B cell (primary cell): ENCODE measurements at regions of chr12 and their contacts with region 1.

Region 1: DNA sequence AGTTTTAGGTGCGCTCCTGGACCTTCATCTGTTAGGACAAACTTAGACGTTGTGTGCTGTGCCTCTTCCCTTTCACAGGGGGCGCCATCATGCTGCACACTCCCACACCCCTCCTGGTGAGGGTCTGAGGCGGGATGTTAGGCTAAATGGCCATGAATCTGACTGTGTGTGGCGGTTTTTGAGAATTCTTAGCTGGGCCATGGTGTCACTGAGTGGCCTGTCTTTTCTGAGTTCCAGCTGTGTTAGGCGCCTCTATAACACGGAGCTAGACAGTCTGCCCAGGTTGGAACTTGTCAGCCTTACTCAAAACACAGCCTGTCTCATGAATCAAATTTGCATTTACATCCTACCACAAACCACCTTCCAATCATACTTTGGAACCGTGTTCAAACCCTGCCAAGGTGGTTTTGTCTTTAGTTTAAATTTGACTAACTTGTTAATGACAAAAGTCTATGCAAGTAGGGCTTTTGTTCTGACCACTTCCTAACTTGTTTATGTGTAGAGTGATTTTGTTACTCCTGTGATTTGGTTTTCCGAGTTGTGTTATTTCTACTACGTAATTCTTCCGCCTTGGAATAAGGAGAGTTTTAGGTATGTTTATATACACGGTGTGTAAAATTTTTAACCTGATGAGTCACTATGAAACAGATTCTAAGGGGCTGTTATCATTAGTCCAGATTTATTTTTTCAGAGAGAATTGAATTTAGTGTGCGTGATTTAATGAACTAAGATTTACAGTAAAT is 19.6 kb downstream of the ACVR1B start:
- DNase-seq: peak; percentile 74
- ATAC-seq: peak; percentile 75
- H3K4me3 ChIP-seq: peak overlapping the region in 2 of 5 experiments; percentile 0 to 16
- H3K4me3 Mint-ChIP-seq: peak overlapping the region; percentile 60
- H3K27ac ChIP-seq: no peak overlapping the region
- H3K27ac Mint-ChIP-seq: peak overlapping the region; percentile 4
- H3K4me1 ChIP-seq: peaks cover 47 to 48% of the 10 kb centered on the region in 2 donors
- H3K4me1 Mint-ChIP-seq: peaks cover 52% of the 10 kb centered on the region
- H3K27me3 ChIP-seq: no peaks in the 10 kb centered on the region
- H3K27me3 Mint-ChIP-seq: no peaks in the 10 kb centered on the region
- CTCF ChIP-seq: peak; percentile 73

Region 2: GRCh38 chr12:51879102-51879501 is 92.0 kb before region 1 on chr12:
- CTCF ChIA-PET with region 1: no interaction called
- POLR2A ChIA-PET with region 1: no interaction called
- intact Hi-C with region 1: loop called (anchors 5 kb)
- DNase-seq: no peak
- ATAC-seq: no peak
- H3K4me3 ChIP-seq: no peak overlapping the region
- H3K4me3 Mint-ChIP-seq: no peak overlapping the region
- H3K27ac ChIP-seq: no peak overlapping the region
- H3K27ac Mint-ChIP-seq: no peak overlapping the region
- H3K4me1 ChIP-seq: no peaks in the 10 kb centered on the region
- H3K4me1 Mint-ChIP-seq: no peaks in the 10 kb centered on the region
- H3K27me3 ChIP-seq: no peaks in the 10 kb centered on the region
- H3K27me3 Mint-ChIP-seq: peaks cover 12% of the 10 kb centered on the region
- CTCF ChIP-seq: no peak

Region 3: GRCh38 chr12:51915951-51916350 is 55.1 kb before region 1 on chr12:
- CTCF ChIA-PET with region 1: no interaction called
- POLR2A ChIA-PET with region 1: no interaction called
- intact Hi-C with region 1: no loop called
- DNase-seq: no peak
- ATAC-seq: no peak
- H3K4me3 ChIP-seq: no peak overlapping the region
- H3K4me3 Mint-ChIP-seq: no peak overlapping the region
- H3K27ac ChIP-seq: no peak overlapping the region
- H3K27ac Mint-ChIP-seq: no peak overlapping the region
- H3K4me1 ChIP-seq: no peaks in the 10 kb centered on the region
- H3K4me1 Mint-ChIP-seq: no peaks in the 10 kb centered on the region
- H3K27me3 ChIP-seq: peaks cover 0 to 2% (median 0%) of the 10 kb centered on the region in 4 experiments
- H3K27me3 Mint-ChIP-seq: peaks cover 11% of the 10 kb centered on the region
- CTCF ChIP-seq: no peak

Region 4: DNA sequence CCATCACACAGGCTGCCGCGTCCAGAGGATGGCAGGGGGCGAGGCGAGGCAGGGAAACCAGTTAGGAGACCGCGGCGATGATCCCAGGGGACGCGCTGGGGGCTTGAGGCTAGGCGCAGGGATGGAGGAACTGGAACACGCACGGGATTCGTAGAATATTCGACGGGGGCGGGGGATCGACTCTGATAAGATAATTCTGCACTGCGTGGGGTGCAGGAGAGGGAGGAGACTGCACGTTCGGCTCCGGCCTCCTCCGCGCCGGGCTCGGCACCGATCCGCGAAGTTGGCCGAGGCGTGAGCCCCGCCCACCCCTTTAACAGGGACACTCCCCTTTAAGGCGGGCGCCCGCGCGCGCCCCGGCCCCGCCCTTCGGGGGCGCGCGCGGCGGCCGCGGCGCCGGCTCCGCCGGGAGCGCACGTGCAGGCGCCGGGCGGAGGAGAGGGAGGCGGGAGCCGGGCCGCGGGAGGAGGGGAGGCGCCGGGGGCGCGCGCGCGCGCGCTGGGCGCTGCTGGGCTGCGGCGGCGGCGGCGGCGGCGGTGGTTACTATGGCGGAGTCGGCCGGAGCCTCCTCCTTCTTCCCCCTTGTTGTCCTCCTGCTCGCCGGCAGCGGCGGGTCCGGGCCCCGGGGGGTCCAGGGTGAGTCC is 19.8 kb before region 1 on chr12 and contains the start of gene ACVR1B:
- CTCF ChIA-PET with region 1: interaction called, 6 read pairs
- POLR2A ChIA-PET with region 1: no interaction called
- intact Hi-C with region 1: loop called (anchors 2 kb)
- DNase-seq: peak; percentile 90
- ATAC-seq: peak; percentile 93
- H3K4me3 ChIP-seq: peak within 1 kb of the TSS; percentile 48 to 80 (median 75)
- H3K4me3 Mint-ChIP-seq: peak within 1 kb of the TSS; percentile 97
- H3K27ac ChIP-seq: peak within 1 kb of the TSS; percentile 6 to 60
- H3K27ac Mint-ChIP-seq: peak within 1 kb of the TSS; percentile 80
- H3K4me1 ChIP-seq: peaks cover 9 to 18% of the 10 kb centered on the region in 2 donors
- H3K4me1 Mint-ChIP-seq: peaks cover 26% of the 10 kb centered on the region
- H3K27me3 ChIP-seq: peaks cover 0 to 28% (median 6%) of the 10 kb centered on the region in 4 experiments
- H3K27me3 Mint-ChIP-seq: peaks cover 27% of the 10 kb centered on the region
- CTCF ChIP-seq: no peak
- total RNA-seq, gene ACVR1B: 8.7 and 10.6 TPM in 2 replicates

Region 5: DNA sequence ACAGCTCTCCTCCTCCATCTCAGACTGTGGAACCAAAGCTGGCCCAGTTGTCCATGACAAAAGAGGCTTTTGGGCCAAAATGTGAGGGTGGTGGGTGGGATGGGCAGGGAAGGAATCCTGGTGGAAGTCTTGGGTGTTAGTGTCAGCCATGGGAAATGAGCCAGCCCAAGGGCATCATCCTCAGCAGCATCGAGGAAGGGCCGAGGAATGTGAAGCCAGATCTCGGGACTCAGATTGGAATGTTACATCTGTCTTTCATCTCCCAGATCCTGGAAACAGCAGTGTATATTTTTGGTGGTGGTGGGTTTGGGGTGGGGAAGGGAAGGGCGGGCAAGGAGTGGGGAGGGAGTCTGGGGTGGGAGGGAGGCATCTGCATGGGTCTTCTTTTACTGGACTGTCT is 23.9 kb after region 1 on chr12:
- CTCF ChIA-PET with region 1: interaction called, 10 read pairs
- POLR2A ChIA-PET with region 1: no interaction called
- intact Hi-C with region 1: no loop called
- DNase-seq: no peak
- ATAC-seq: no peak
- H3K4me3 ChIP-seq: no peak overlapping the region
- H3K4me3 Mint-ChIP-seq: no peak overlapping the region
- H3K27ac ChIP-seq: no peak overlapping the region
- H3K27ac Mint-ChIP-seq: no peak overlapping the region
- H3K4me1 ChIP-seq: no peaks in the 10 kb centered on the region
- H3K4me1 Mint-ChIP-seq: peaks cover 2% of the 10 kb centered on the region
- H3K27me3 ChIP-seq: no peaks in the 10 kb centered on the region
- H3K27me3 Mint-ChIP-seq: no peaks in the 10 kb centered on the region
- CTCF ChIP-seq: no peak